Mammary epithelial cell (primary cell): ENCODE measurements at regions of chrX and their contacts with region 1.

Region 1: DNA sequence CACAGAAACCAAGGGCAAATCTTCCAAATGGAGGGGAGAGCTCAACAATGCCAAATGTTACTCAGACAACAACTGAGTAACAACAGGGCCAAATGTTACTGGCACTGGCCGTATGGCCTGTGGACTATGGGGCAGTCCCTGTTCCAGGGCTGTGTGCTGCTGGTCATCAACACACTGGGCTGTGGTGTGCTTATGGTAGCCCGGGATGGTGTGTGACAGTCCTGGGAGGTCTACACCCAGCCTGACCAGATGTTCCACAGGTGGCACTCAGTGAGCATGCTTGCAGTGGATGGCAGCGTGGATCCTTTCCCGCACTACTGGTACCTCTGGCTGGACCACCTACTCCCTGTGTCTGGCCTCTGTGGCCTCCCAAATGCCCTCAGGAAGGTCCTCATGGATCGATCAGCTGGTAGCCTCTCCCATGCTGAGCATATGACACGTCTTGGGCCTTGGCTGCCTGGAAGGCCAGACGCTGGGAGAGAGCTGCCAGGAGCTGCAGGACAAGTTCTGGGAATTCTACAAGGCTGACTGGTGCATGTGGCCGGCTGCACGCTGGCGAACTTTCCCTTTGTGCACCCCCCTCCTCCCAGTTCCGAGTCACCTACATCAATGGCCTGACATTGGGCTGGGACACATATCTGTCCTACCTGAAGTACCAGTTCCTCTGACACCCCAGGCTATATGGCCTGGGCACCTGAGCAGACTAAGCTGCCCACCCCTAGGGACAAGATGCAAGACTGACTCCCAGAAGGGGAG is 59.6 kb upstream of the IQSEC2 start:
- DNase-seq: no peak
- H3K4me3 ChIP-seq: no peak overlapping the region
- H3K27ac ChIP-seq: no peak overlapping the region
- H3K4me1 ChIP-seq: no peaks in the 10 kb centered on the region
- H3K27me3 ChIP-seq: peaks cover 2% of the 10 kb centered on the region
- CTCF ChIP-seq: no peak

Region 2: DNA sequence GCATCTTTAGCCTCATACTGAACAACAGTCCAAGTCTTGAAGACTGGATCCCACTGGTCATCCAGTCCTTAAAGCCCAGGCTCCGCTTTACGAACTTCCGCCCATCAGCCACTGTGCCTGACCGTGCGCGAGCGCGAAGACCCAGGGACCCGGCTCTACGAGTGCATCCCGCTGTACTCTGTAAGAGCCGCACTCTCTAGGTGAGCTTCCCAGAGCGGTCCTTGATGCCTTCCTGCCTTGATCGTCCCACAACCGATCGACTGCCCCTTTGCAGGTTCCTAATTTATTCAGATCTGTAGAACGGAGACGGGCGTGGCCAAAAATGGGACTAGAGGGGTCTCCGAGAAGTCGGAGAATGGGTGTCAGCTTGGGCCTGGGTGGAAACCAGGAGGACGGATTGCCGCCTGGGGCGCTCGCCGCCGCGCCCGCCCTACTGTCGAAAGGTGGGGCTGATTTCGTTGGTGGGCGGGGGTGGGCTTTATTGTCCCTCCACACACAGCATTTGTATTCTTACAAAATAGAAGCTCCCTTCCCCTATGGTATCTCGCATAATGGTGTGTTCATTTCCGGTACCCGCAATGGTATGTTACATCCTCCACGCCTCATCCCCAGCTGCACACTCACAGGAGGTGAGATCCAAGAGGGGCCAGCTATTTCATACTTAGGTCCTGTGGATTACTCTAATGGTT is 340.4 kb before region 1 on chrX:
- CTCF ChIA-PET with region 1: no interaction called
- dilution Hi-C with region 1: no loop called
- in situ Hi-C with region 1: no loop called
- intact Hi-C with region 1: no loop called
- DNase-seq: no peak
- H3K4me3 ChIP-seq: no peak overlapping the region
- H3K27ac ChIP-seq: no peak overlapping the region
- H3K4me1 ChIP-seq: peaks cover 3% of the 10 kb centered on the region
- H3K27me3 ChIP-seq: no peaks in the 10 kb centered on the region
- CTCF ChIP-seq: no peak

Region 3: DNA sequence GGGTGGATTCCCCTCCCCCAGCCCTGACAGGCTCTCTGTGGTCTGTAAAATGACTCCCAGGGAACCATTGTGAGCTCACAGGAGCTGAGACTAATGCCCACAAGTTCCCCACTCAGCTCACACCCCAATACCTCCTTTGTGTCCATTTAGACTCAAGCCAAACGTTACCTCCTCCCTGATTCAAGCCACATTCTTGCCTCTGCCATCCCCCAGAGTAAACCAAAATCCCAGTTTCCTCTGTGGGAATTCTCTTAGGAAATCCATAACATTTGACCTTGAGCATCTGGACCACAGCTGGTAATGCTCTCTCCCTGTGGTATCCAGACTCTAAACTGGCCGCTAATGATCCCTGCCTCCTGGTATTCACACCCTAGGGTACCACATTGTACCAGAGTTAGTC is 89.7 kb before region 1 on chrX:
- CTCF ChIA-PET with region 1: no interaction called
- dilution Hi-C with region 1: no loop called
- in situ Hi-C with region 1: no loop called
- intact Hi-C with region 1: no loop called
- DNase-seq: no peak
- H3K4me3 ChIP-seq: no peak overlapping the region
- H3K27ac ChIP-seq: no peak overlapping the region
- H3K4me1 ChIP-seq: no peaks in the 10 kb centered on the region
- H3K27me3 ChIP-seq: no peaks in the 10 kb centered on the region
- CTCF ChIP-seq: no peak

Region 4: DNA sequence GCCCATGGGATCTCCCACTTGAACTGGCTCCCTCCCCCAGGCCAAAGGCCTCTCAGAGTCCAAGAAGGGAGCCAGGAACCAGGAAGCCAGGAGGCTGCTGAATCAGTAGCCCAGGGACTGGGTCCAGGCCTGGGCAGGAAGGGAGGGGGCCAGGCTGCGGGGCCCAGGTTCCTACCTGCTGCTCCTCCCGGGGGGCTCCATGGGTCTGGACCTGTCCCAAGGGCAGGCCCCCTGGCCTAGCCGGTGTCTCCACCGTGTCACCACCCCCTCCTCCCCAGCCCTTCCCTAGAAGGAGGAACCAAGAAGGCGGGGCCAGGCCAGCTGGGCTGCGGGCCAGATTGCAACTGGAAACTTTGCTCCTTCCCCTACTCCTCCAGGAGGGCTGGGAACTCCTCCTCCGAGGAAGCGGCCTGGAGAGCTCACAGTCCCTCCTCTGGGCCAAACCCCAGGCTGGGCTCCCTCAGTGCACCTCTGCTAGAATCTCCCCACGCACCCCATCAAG is 59.7 kb before region 1 on chrX and contains the start of gene IQSEC2:
- CTCF ChIA-PET with region 1: no interaction called
- dilution Hi-C with region 1: no loop called
- in situ Hi-C with region 1: no loop called
- intact Hi-C with region 1: no loop called
- DNase-seq: peak; percentile 71
- H3K4me3 ChIP-seq: peak within 1 kb of the TSS; percentile 22 to 55 (median 48)
- H3K27ac ChIP-seq: peak within 1 kb of the TSS; percentile 46
- H3K4me1 ChIP-seq: peaks cover 3% of the 10 kb centered on the region
- H3K27me3 ChIP-seq: no peaks in the 10 kb centered on the region
- CTCF ChIP-seq: no peak
- total RNA-seq, gene IQSEC2: 12.0 to 12.3 TPM

Region 5: GRCh38 chrX:53294024-53294648 is 46.9 kb before region 1 on chrX:
- CTCF ChIA-PET with region 1: no interaction called
- dilution Hi-C with region 1: loop called (anchors 5 kb)
- in situ Hi-C with region 1: no loop called
- intact Hi-C with region 1: no loop called
- DNase-seq: no peak
- H3K4me3 ChIP-seq: no peak overlapping the region
- H3K27ac ChIP-seq: no peak overlapping the region
- H3K4me1 ChIP-seq: no peaks in the 10 kb centered on the region
- H3K27me3 ChIP-seq: no peaks in the 10 kb centered on the region
- CTCF ChIP-seq: peak; percentile 17 to 33

Region 6: DNA sequence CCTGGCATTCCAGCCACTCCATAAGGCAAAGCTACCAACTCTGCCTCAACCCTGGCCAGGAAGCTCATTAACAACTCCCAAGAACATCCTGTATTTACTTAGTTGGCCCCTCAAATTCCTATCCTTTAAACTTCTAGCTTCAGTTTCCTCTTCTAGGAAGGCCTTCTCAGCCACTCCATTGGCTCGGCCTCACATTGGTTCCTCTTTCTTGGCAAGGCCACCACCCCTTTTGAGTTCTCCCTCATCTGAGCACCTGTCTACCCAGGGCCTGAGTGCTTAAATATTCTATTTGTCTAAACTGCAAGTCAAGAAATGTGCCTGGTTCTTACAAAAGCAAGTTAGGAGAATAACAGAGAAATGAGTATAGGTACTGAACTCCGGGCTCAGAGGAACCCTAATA is 71.4 kb after region 1 on chrX:
- CTCF ChIA-PET with region 1: no interaction called
- dilution Hi-C with region 1: loop called (anchors 5 kb)
- in situ Hi-C with region 1: no loop called
- intact Hi-C with region 1: no loop called
- DNase-seq: no peak
- H3K4me3 ChIP-seq: no peak overlapping the region
- H3K27ac ChIP-seq: no peak overlapping the region
- H3K4me1 ChIP-seq: no peaks in the 10 kb centered on the region
- H3K27me3 ChIP-seq: no peaks in the 10 kb centered on the region
- CTCF ChIP-seq: no peak

Region 7: DNA sequence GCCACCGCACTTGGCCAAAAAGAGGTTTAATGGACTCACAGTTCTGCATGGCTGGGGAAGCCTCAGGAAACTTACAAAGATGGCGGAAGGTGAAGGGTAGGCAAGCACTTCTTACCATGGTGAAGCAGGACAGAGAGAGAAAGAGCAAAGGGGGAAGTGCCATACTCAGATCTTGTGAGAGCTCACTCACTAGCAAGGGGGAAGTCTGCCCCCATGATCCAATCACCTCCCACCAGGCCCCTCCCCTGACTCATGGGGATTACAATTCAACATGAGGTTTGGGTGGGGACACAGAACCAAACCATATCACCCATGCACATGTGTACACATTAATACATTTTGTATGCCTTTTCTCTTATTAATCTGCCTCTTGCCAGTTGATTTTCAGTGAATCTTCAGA is 170.3 kb after region 1 on chrX:
- CTCF ChIA-PET with region 1: no interaction called
- dilution Hi-C with region 1: no loop called
- in situ Hi-C with region 1: no loop called
- intact Hi-C with region 1: no loop called
- DNase-seq: no peak
- H3K4me3 ChIP-seq: no peak overlapping the region
- H3K27ac ChIP-seq: no peak overlapping the region
- H3K4me1 ChIP-seq: no peaks in the 10 kb centered on the region
- H3K27me3 ChIP-seq: peaks cover 2% of the 10 kb centered on the region
- CTCF ChIP-seq: no peak